ENCODE measurements at regions of chr5 and their contacts with region 1.

Region 1: DNA sequence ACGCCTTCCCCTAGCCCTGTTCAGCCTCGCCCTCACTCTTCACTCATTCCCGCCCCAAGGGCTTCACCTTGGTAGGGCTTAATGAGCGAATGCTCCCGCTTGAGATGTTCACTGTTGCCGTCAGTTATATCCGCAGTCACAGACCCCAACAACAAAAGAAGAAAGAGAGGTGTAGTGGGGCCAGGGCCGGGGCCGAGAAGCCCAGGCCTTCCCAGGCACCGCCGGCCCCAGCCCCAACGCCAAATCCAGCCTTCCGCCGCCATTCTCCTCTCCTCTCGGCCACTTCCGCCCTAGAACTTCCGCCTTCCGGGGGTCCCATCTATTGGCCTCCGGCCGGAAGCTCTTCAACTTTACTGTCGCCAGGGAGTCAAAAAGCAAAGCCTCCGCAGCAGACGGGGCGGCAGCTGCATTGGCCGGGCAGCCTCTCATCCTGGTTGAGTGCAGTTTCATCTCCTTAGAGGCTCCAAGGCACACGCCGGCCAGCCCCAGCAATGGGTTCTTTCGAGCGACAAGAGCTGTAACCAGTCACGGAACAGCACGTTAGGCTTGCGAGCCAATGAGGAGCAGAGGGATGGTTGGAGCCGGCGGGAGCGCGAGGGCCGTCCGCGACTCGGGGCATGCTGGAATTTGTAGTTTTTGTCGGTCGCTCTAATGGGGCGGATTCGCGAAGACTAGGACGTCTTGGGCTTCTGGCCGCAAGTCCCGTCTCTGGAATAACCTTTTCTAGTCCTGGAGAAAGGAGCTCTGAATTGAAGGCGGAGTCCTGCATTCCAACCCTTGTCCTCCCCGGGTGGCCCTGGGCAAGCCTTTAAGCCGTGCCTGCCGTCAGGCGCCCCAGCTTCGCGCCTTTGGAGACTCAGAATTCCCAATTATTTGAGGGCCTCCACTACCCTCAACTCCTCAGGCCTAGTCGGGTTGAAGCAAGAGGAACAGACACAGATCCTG is at the start of gene LMAN2:
- DNase-seq: peak; percentile 83
- ATAC-seq: peak; percentile 98
- H3K4me3 Mint-ChIP-seq: peak within 1 kb of the TSS; percentile 98
- H3K27ac Mint-ChIP-seq: peak within 1 kb of the TSS; percentile 100
- H3K4me1 Mint-ChIP-seq: peaks cover 59% of the 10 kb centered on the region
- H3K27me3 Mint-ChIP-seq: no peaks in the 10 kb centered on the region
- CTCF ChIP-seq: no peak
- total RNA-seq, gene LMAN2: 88.0 and 89.7 TPM in 2 replicates

Region 2: DNA sequence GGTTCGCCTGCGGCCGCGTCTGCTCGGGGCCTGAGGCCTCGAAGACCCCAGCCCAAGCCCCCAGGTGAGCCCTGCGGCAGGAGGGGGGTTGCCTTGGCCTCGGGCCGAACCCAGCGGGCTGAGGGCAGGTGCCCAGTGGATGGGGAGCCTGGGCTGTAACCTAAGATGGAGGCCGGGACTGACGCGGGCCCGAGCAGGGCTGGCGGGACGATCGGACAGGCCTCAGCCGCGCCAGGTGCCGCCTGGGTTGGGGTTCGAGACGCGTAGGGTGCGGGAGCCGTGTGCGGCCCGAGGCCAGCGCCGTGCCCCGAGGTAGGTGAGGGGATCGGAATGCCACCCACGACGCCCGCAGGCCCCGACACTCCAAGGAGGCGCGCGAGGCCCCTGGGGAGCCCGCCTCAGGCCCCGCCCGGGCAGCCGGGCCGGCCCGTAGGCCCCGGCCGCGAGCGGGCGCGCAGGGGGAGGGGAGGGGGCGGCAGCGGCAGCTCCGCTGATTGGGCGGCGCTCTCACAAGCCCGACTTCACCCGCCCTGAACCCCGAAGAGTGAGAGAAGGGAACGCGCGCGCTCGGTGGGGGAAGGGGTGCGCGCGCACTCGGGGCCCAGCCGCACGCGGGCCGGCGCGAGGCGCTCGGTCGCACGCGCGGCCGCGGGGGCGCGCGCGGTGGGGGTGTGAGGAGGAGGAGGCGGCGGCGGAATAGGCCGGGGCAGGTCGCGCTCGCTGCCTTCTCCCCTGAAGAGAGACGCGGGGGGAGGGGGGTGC is 218.4 kb before region 1 on chr5 and contains the start of gene NSD1:
- CTCF ChIA-PET with region 1: no interaction called
- POLR2A ChIA-PET with region 1: interaction called, 4 read pairs
- intact Hi-C with region 1: loop called (anchors 5 kb)
- DNase-seq: peak; percentile 92
- ATAC-seq: peak; percentile 74
- H3K4me3 Mint-ChIP-seq: peak within 1 kb of the TSS; percentile 85
- H3K27ac Mint-ChIP-seq: peak within 1 kb of the TSS; percentile 87
- H3K4me1 Mint-ChIP-seq: peaks cover 52% of the 10 kb centered on the region
- H3K27me3 Mint-ChIP-seq: no peaks in the 10 kb centered on the region
- CTCF ChIP-seq: no peak
- total RNA-seq, gene NSD1: 103 and 108 TPM in 2 replicates

Region 3: GRCh38 chr5:177154003-177154643 is 197.5 kb before region 1 on chr5:
- CTCF ChIA-PET with region 1: no interaction called
- POLR2A ChIA-PET with region 1: no interaction called
- intact Hi-C with region 1: no loop called
- DNase-seq: no peak
- ATAC-seq: no peak
- H3K4me3 Mint-ChIP-seq: no peak overlapping the region
- H3K27ac Mint-ChIP-seq: no peak overlapping the region
- H3K4me1 Mint-ChIP-seq: peaks cover 20% of the 10 kb centered on the region
- H3K27me3 Mint-ChIP-seq: no peaks in the 10 kb centered on the region
- CTCF ChIP-seq: no peak

Region 4: GRCh38 chr5:177311723-177312648 is 39.7 kb before region 1 on chr5 and contains the start of gene MXD3:
- CTCF ChIA-PET with region 1: interaction called, 5 read pairs
- POLR2A ChIA-PET with region 1: interaction called, 5 read pairs
- intact Hi-C with region 1: loop called (anchors 1 kb)
- DNase-seq: peak; percentile 89
- ATAC-seq: peak; percentile 90
- H3K4me3 Mint-ChIP-seq: peak within 1 kb of the TSS; percentile 80
- H3K27ac Mint-ChIP-seq: peak within 1 kb of the TSS; percentile 47
- H3K4me1 Mint-ChIP-seq: peaks cover 38% of the 10 kb centered on the region
- H3K27me3 Mint-ChIP-seq: no peaks in the 10 kb centered on the region
- CTCF ChIP-seq: no peak
- total RNA-seq, gene MXD3: 7.6 and 9.1 TPM in 2 replicates

Region 5: GRCh38 chr5:177362610-177363507 is 11.2 kb after region 1 on chr5:
- CTCF ChIA-PET with region 1: no interaction called
- POLR2A ChIA-PET with region 1: interaction called, 23 read pairs
- intact Hi-C with region 1: loop called (anchors 1 kb)
- DNase-seq: peak; percentile 60
- ATAC-seq: peak; percentile 73
- H3K4me3 Mint-ChIP-seq: peak overlapping the region; percentile 82
- H3K27ac Mint-ChIP-seq: peak overlapping the region; percentile 83
- H3K4me1 Mint-ChIP-seq: peaks cover 67% of the 10 kb centered on the region
- H3K27me3 Mint-ChIP-seq: no peaks in the 10 kb centered on the region
- CTCF ChIP-seq: no peak

Region 6: GRCh38 chr5:177425801-177426565 is 74.3 kb after region 1 on chr5:
- CTCF ChIA-PET with region 1: no interaction called
- POLR2A ChIA-PET with region 1: interaction called, 8 read pairs
- intact Hi-C with region 1: loop called (anchors 1 kb)
- DNase-seq: peak; percentile 91
- ATAC-seq: peak; percentile 85
- H3K4me3 Mint-ChIP-seq: peak overlapping the region; percentile 91
- H3K27ac Mint-ChIP-seq: peak overlapping the region; percentile 93
- H3K4me1 Mint-ChIP-seq: peaks cover 53% of the 10 kb centered on the region
- H3K27me3 Mint-ChIP-seq: no peaks in the 10 kb centered on the region
- CTCF ChIP-seq: no peak